CD4-positive, alpha-beta memory T cell (primary cell): ENCODE measurements at regions of chr15 and their contacts with region 1.

Region 1: GRCh38 chr15:81323944-81324881 is at the start of gene STARD5:
- DNase-seq: peak; percentile 91 to 95 (median 92)
- H3K4me3 ChIP-seq: peak within 1 kb of the TSS; percentile 76 to 87
- H3K4me3 Mint-ChIP-seq: peak within 1 kb of the TSS; percentile 92 to 99 (median 96)
- H3K27ac ChIP-seq: peak within 1 kb of the TSS; percentile 55
- H3K27ac Mint-ChIP-seq: peak within 1 kb of the TSS; percentile 83 to 97 (median 94)
- H3K4me1 ChIP-seq: peaks cover 29% of the 10 kb centered on the region
- H3K4me1 Mint-ChIP-seq: peaks cover 19 to 33% (median 25%) of the 10 kb centered on the region in 4 donors
- H3K27me3 ChIP-seq: no peaks in the 10 kb centered on the region
- H3K27me3 Mint-ChIP-seq: no peaks in the 10 kb centered on the region
- total RNA-seq, gene STARD5: 5.0 to 8.0 TPM

Region 2: GRCh38 chr15:81106560-81106959 is 217.7 kb before region 1 on chr15:
- CTCF ChIA-PET with region 1: no interaction called
- POLR2A ChIA-PET with region 1: no interaction called
- intact Hi-C with region 1: no loop called
- DNase-seq: peak in 4 of 5 donors; percentile 25 to 35 (median 28)
- H3K4me3 ChIP-seq: no peak overlapping the region
- H3K4me3 Mint-ChIP-seq: no peak overlapping the region
- H3K27ac ChIP-seq: no peak overlapping the region
- H3K27ac Mint-ChIP-seq: peak overlapping the region in 1 of 7 donors; percentile 14
- H3K4me1 ChIP-seq: no peaks in the 10 kb centered on the region
- H3K4me1 Mint-ChIP-seq: no peaks in the 10 kb centered on the region
- H3K27me3 ChIP-seq: no peaks in the 10 kb centered on the region
- H3K27me3 Mint-ChIP-seq: peaks cover 17 to 20% of the 10 kb centered on the region in 2 donors

Region 3: GRCh38 chr15:81286621-81287121 is 37.5 kb before region 1 on chr15:
- CTCF ChIA-PET with region 1: interaction called, 3 read pairs
- POLR2A ChIA-PET with region 1: interaction called, 702 read pairs
- intact Hi-C with region 1: loop called (anchors 5 kb)
- DNase-seq: peak; percentile 57 to 62 (median 60)
- H3K4me3 ChIP-seq: peak overlapping the region in 1 of 2 donors; percentile 32
- H3K4me3 Mint-ChIP-seq: peak overlapping the region; percentile 22 to 86 (median 76)
- H3K27ac ChIP-seq: peak overlapping the region; percentile 58
- H3K27ac Mint-ChIP-seq: peak overlapping the region; percentile 93 to 99 (median 97)
- H3K4me1 ChIP-seq: peaks cover 75% of the 10 kb centered on the region
- H3K4me1 Mint-ChIP-seq: peaks cover 59 to 81% (median 71%) of the 10 kb centered on the region in 4 donors
- H3K27me3 ChIP-seq: no peaks in the 10 kb centered on the region
- H3K27me3 Mint-ChIP-seq: no peaks in the 10 kb centered on the region

Region 4: GRCh38 chr15:81301815-81302399 is 22.3 kb before region 1 on chr15:
- CTCF ChIA-PET with region 1: interaction called, 6 read pairs
- POLR2A ChIA-PET with region 1: interaction called, 702 read pairs
- intact Hi-C with region 1: loop called (anchors 1 kb)
- DNase-seq: no peak
- H3K4me3 ChIP-seq: peak overlapping the region; percentile 77 to 87
- H3K4me3 Mint-ChIP-seq: peak overlapping the region; percentile 98 to 100 (median 100)
- H3K27ac ChIP-seq: peak overlapping the region; percentile 49
- H3K27ac Mint-ChIP-seq: peak overlapping the region; percentile 88 to 98 (median 96)
- H3K4me1 ChIP-seq: peaks cover 64% of the 10 kb centered on the region
- H3K4me1 Mint-ChIP-seq: peaks cover 46 to 79% (median 53%) of the 10 kb centered on the region in 4 donors
- H3K27me3 ChIP-seq: no peaks in the 10 kb centered on the region
- H3K27me3 Mint-ChIP-seq: no peaks in the 10 kb centered on the region

Region 5: DNA sequence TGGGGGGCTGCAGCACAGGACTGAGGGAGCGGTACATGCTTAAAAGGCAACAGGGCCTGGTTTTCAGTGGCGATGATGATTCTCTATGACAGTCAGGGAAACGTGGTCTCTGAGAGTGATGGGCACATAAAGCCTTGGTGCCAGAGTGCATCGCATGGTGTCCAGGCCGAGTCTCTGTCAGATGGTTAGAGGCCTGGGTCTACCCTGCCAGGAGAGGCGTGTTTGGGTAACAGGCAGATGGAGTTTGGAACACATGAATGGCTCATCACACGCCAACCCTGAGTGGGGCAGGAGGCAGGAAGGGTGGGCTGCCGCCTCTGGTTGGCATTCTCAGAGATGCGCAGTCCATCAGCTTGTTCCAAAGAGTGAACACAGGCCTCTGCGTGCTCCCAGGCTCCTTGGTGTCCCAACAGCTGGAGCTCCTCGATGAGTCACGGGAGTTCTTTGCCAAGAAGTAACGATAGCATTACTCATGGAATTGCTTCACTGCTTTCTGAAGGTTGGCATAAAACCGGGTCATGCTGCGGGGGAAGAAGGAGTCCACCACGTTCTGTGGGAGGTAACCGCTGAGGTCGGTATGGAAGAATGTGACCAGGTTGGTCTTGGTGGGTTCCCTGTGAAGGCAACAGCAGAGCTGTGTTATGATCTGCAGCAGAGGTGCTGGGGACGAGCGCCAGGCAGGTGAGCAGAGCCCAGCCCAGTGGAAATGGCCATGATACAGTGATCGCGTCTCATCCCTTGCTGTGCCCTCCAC is 11.2 kb before region 1 on chr15:
- CTCF ChIA-PET with region 1: interaction called, 4 read pairs
- POLR2A ChIA-PET with region 1: interaction called, 116 read pairs
- intact Hi-C with region 1: loop called (anchors 2 kb)
- DNase-seq: no peak
- H3K4me3 ChIP-seq: no peak overlapping the region
- H3K4me3 Mint-ChIP-seq: no peak overlapping the region
- H3K27ac ChIP-seq: no peak overlapping the region
- H3K27ac Mint-ChIP-seq: peak overlapping the region in 5 of 7 donors; percentile 26 to 97 (median 83)
- H3K4me1 ChIP-seq: peaks cover 54% of the 10 kb centered on the region
- H3K4me1 Mint-ChIP-seq: peaks cover 43 to 77% (median 64%) of the 10 kb centered on the region in 4 donors
- H3K27me3 ChIP-seq: no peaks in the 10 kb centered on the region
- H3K27me3 Mint-ChIP-seq: no peaks in the 10 kb centered on the region

Region 6: GRCh38 chr15:81400640-81401236 is 76.5 kb after region 1 on chr15:
- CTCF ChIA-PET with region 1: no interaction called
- POLR2A ChIA-PET with region 1: no interaction called
- intact Hi-C with region 1: no loop called
- DNase-seq: peak in 4 of 5 donors; percentile 42 to 57 (median 48)
- H3K4me3 ChIP-seq: no peak overlapping the region
- H3K4me3 Mint-ChIP-seq: no peak overlapping the region
- H3K27ac ChIP-seq: no peak overlapping the region
- H3K27ac Mint-ChIP-seq: no peak overlapping the region
- H3K4me1 ChIP-seq: no peaks in the 10 kb centered on the region
- H3K4me1 Mint-ChIP-seq: peaks cover 0 to 4% (median 3%) of the 10 kb centered on the region in 4 donors
- H3K27me3 ChIP-seq: peaks cover 5% of the 10 kb centered on the region
- H3K27me3 Mint-ChIP-seq: peaks cover 5 to 7% of the 10 kb centered on the region in 2 donors